ENCODE measurements at regions of chr15 and their contacts with region 1.

Region 1: GRCh38 chr15:45198337-45199135 is 10.8 kb upstream of the SHF start:
- DNase-seq: peak; percentile 99
- H3K4me3 ChIP-seq: peak overlapping the region; percentile 56 to 82 (median 68)
- H3K27ac ChIP-seq: peak overlapping the region; percentile 43
- H3K4me1 ChIP-seq: peaks cover 8% of the 10 kb centered on the region
- H3K27me3 ChIP-seq: peaks cover 7% of the 10 kb centered on the region in 2 experiments
- CTCF ChIP-seq: peak; percentile 83 to 84
- POLR2A ChIP-seq: peak; percentile 83

Region 2: DNA sequence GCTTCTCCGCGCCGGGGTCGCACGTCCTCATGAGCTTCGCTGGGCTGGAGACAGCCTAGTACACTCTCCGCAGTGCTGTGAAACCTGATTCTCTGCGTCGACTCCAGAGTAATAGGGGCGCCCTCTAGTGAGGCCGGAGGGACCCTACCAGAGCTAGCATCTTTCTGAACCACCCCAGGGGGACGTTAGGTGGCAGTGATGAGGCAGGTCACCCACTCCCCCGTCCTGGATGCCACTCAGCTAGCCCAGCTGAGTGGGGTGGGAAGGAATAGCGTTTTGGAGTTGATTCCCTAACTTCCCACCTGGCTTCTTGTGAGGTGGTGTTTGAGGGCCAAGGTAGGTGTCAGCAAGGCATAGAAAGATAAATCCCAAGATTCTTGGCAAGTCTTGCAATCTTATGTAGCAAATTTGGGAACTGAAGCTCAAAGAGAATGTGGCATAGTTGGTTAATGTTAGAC is 80.4 kb before region 1 on chr15:
- CTCF ChIA-PET with region 1: interaction called, 4 read pairs
- POLR2A ChIA-PET with region 1: no interaction called
- dilution Hi-C with region 1: no loop called
- intact Hi-C with region 1: loop called (anchors 2 kb)
- DNase-seq: peak; percentile 92
- H3K4me3 ChIP-seq: peak overlapping the region in 1 of 3 experiments; percentile 22
- H3K27ac ChIP-seq: no peak overlapping the region
- H3K4me1 ChIP-seq: peaks cover 10% of the 10 kb centered on the region
- H3K27me3 ChIP-seq: peaks cover 46 to 47% of the 10 kb centered on the region in 2 experiments
- CTCF ChIP-seq: peak; percentile 100
- POLR2A ChIP-seq: no peak

Region 3: DNA sequence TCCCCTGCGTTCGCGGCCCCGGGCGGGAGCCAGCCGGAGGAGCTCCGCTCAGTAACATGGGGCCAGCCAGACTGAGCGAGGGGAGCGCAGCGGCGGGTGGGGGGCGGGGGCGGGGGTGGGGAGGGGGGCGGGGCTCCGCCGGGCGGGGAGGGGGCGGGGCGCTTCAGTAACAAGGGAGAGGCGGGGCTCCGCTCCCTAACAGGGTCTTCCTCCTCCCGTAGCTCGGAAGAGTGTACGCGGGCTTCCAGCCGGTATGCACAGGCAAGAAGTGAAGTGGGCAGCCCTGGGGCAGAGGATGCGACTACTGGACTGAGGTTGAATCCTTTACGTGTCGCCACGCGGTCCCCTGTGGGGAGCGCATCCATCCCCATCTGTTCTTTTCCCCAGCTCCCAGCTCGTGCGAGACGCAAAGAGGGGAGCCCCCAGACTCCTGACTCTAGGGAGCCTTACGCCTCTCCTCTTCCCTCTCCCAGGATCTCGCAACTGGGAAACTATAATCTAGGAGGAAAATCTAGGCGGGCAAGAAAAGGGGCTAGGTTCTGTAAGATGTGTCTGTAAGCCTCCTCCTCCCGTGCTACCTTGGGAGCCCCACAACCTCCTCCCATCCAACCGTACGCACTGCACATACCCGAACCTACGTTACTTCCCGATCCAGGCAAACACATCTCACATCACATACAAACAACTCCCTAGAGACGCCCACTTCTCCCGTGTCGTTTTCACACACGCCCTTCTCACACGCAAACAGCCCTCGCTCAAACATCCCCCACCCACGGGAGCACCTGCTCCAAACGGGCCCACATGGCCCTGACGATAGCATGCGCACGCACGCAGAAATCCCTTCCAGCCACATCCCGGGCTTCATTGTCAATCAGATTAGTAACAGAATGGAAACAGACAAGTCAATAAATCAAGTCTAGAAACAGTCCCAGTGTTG is 10.4 kb before region 1 on chr15 and contains the start of gene SHF:
- CTCF ChIA-PET with region 1: interaction called, 7 read pairs
- POLR2A ChIA-PET with region 1: interaction called, 7 read pairs
- dilution Hi-C with region 1: no loop called
- intact Hi-C with region 1: loop called (anchors 1 kb)
- DNase-seq: peak; percentile 49
- H3K4me3 ChIP-seq: peak within 1 kb of the TSS; percentile 43 to 68 (median 67)
- H3K27ac ChIP-seq: no peak within 1 kb of the TSS
- H3K4me1 ChIP-seq: peaks cover 6% of the 10 kb centered on the region
- H3K27me3 ChIP-seq: peaks cover 2 to 9% of the 10 kb centered on the region in 2 experiments
- CTCF ChIP-seq: no peak
- POLR2A ChIP-seq: no peak
- total RNA-seq, gene SHF: 5.2 and 5.6 TPM in 2 replicates

Region 4: GRCh38 chr15:45314960-45315359 is 116.4 kb after region 1 on chr15:
- CTCF ChIA-PET with region 1: no interaction called
- POLR2A ChIA-PET with region 1: no interaction called
- dilution Hi-C with region 1: no loop called
- intact Hi-C with region 1: no loop called
- DNase-seq: no peak
- H3K4me3 ChIP-seq: no peak overlapping the region
- H3K27ac ChIP-seq: no peak overlapping the region
- H3K4me1 ChIP-seq: no peaks in the 10 kb centered on the region
- H3K27me3 ChIP-seq: no peaks in the 10 kb centered on the region
- CTCF ChIP-seq: no peak
- POLR2A ChIP-seq: no peak

Region 5: GRCh38 chr15:45402162-45402954 is 203.8 kb after region 1 on chr15:
- CTCF ChIA-PET with region 1: interaction called, 4 read pairs
- POLR2A ChIA-PET with region 1: interaction called, 3 read pairs
- dilution Hi-C with region 1: no loop called
- intact Hi-C with region 1: loop called (anchors 1 kb)
- DNase-seq: peak; percentile 98
- H3K4me3 ChIP-seq: peak overlapping the region; percentile 48 to 85 (median 76)
- H3K27ac ChIP-seq: peak overlapping the region; percentile 21
- H3K4me1 ChIP-seq: peaks cover 10% of the 10 kb centered on the region
- H3K27me3 ChIP-seq: no peaks in the 10 kb centered on the region
- CTCF ChIP-seq: no peak
- POLR2A ChIP-seq: peak; percentile 98

Region 6: GRCh38 chr15:45587095-45587860 is 388.7 kb after region 1 on chr15 and contains the start of gene BLOC1S6:
- CTCF ChIA-PET with region 1: no interaction called
- POLR2A ChIA-PET with region 1: no interaction called
- dilution Hi-C with region 1: no loop called
- intact Hi-C with region 1: loop called (anchors 2 kb)
- DNase-seq: peak; percentile 92
- H3K4me3 ChIP-seq: peak within 1 kb of the TSS; percentile 89 to 98 (median 90)
- H3K27ac ChIP-seq: peak within 1 kb of the TSS; percentile 83
- H3K4me1 ChIP-seq: peaks cover 29% of the 10 kb centered on the region
- H3K27me3 ChIP-seq: peaks cover 0 to 2% of the 10 kb centered on the region in 2 experiments
- CTCF ChIP-seq: no peak
- POLR2A ChIP-seq: peak; percentile 89
- total RNA-seq, gene BLOC1S6: 39.2 and 43.4 TPM in 2 replicates

Region 7: DNA sequence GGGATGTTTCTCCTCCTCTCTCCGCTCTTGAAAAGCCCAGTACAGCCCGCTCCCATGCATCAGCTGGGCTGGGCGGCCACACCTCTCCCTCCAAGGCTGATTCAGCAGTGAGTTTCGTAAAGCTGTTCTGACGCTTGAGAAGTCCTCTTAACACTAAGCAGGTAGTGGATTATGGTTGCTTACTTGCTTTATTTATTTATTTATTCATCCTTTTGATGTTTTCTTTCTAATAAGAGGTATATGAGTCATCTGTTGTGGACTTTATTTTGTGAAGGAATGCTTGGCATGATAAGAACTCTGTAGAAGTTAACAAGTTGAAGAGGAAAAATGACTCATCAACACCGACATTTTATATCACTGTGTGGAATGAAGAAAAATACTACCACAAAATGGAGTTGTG is 721.3 kb after region 1 on chr15:
- CTCF ChIA-PET with region 1: no interaction called
- POLR2A ChIA-PET with region 1: no interaction called
- dilution Hi-C with region 1: no loop called
- intact Hi-C with region 1: loop called (anchors 5 kb)
- DNase-seq: peak; percentile 93
- H3K4me3 ChIP-seq: peak overlapping the region in 1 of 3 experiments; percentile 18
- H3K27ac ChIP-seq: peak overlapping the region; percentile 94
- H3K4me1 ChIP-seq: peaks cover 30% of the 10 kb centered on the region
- H3K27me3 ChIP-seq: no peaks in the 10 kb centered on the region
- CTCF ChIP-seq: no peak
- POLR2A ChIP-seq: no peak